Activated CD4-positive, alpha-beta T cell treated with anti-CD3 and anti-CD28 coated beads for 36 hours (primary cell): ENCODE measurements at regions of chr7 and their contacts with region 1.

Region 1: DNA sequence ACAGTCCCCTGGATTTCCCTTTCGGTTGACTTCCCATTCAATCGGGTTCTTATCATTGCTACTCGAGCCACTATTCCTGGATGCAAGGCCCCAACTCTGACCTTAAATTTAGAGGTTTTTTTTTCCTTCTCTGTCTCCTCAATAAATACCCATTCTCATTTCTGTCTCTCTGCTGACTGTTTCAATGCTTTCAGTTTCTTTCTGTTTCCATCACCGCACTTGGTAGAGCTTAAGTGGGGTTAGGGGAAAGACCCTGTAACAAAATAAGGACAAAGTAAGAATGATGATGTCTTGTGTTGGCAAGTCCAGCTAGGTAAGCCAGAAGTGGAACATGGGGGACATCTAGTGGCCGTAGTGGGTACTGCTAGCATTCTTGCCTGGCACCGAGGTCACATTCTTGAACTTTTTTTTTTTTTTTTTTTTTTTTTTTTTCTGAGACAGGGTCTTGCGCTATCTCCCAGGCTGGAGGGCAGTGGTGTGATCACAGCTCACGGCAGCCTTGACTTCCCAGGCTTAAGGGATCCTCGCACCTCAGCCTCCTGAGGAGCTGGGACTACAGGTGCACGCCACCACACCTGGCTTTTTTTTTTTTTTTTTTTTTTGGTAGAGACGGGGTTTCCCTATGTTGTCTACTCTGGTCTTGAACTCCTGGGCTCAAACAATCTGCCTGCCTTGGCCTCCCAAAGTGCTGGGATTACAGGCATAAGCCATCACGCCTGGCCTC is 40.3 kb downstream of the ZC3HC1 start:
- DNase-seq: peak; percentile 94
- ATAC-seq: peak; percentile 85
- H3K4me3 Mint-ChIP-seq: no peak overlapping the region
- H3K27ac Mint-ChIP-seq: peak overlapping the region; percentile 88
- H3K4me1 Mint-ChIP-seq: peaks cover 12% of the 10 kb centered on the region
- H3K27me3 Mint-ChIP-seq: no peaks in the 10 kb centered on the region

Region 2: DNA sequence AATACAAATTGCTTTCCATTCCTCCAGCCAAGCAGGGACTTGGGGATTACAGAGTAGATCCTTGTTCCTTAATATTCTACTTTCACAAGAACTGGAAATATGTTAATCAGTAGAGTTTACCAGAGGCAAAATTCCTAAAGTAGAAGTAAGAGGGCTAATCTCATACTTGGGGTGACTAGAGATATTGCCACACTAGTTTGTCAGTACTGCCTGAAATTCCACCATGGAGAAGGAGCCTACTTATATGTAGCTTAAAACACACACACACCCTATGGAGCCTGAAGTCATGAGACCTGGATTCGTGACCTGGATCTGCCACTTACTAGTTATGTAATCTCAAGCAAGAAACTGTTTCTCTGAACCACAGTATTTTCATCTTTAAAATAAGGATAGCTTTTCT is 542.8 kb before region 1 on chr7:
- CTCF ChIA-PET with region 1: interaction called, 4 read pairs
- POLR2A ChIA-PET with region 1: no interaction called
- intact Hi-C with region 1: loop called in 1 of 2 experiments (anchors 10 kb)
- DNase-seq: no peak
- ATAC-seq: no peak
- H3K4me3 Mint-ChIP-seq: no peak overlapping the region
- H3K27ac Mint-ChIP-seq: no peak overlapping the region
- H3K4me1 Mint-ChIP-seq: peaks cover 16% of the 10 kb centered on the region
- H3K27me3 Mint-ChIP-seq: no peaks in the 10 kb centered on the region

Region 3: GRCh38 chr7:129635300-129636029 is 375.4 kb before region 1 on chr7:
- CTCF ChIA-PET with region 1: no interaction called
- POLR2A ChIA-PET with region 1: interaction called, 13 read pairs
- intact Hi-C with region 1: no loop called
- DNase-seq: peak; percentile 84
- ATAC-seq: peak; percentile 97
- H3K4me3 Mint-ChIP-seq: no peak overlapping the region
- H3K27ac Mint-ChIP-seq: peak overlapping the region; percentile 65
- H3K4me1 Mint-ChIP-seq: peaks cover 37% of the 10 kb centered on the region
- H3K27me3 Mint-ChIP-seq: no peaks in the 10 kb centered on the region

Region 4: DNA sequence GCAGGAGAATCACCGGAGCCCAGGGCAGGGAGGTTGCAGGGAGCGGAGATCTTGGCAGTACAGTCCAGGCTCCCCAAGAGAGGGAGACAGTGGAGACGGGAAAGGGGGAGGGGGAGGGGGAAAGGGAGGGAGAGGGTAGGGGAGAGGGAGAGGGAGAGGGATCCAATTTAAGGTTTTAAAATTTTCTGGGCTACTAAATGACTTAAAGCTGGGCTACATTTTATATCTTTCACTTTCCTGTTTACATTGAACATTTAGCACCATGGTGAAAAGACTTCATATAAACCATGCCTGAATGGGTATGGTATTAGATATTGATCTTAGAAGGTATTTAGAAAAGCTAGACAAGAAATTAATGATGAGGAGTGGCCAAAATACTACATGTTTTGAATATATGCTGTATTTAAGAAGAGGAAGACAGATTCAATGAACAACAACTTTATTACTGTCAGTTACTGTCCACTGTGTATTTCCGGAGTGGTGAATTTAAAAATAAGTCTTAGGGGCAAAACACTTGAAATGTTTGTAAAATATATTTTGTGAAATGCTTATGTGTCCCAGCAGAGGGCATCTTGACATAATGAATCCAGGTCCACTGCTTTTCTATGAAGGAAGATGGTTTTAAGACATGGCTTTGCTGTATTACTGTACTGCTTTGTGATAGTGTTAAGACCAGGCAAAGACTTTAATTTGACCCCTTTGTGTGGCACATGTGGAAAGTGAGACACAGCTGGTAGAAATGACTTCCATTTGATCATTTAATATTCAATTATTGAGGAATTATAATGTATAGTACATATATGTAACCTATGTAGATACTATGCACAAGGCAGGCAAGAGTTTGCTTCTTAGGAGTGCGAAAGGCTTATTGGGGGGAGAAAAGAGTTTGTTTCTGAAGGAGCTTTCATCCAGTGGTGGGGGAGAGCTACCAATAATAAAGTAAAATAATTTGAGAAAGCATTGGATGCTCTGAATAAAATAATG is 346.5 kb before region 1 on chr7:
- CTCF ChIA-PET with region 1: interaction called, 7 read pairs
- POLR2A ChIA-PET with region 1: no interaction called
- intact Hi-C with region 1: loop called in 1 of 2 experiments (anchors 1 kb)
- DNase-seq: no peak
- ATAC-seq: no peak
- H3K4me3 Mint-ChIP-seq: no peak overlapping the region
- H3K27ac Mint-ChIP-seq: peak overlapping the region; percentile 25
- H3K4me1 Mint-ChIP-seq: peaks cover 10% of the 10 kb centered on the region
- H3K27me3 Mint-ChIP-seq: no peaks in the 10 kb centered on the region

Region 5: DNA sequence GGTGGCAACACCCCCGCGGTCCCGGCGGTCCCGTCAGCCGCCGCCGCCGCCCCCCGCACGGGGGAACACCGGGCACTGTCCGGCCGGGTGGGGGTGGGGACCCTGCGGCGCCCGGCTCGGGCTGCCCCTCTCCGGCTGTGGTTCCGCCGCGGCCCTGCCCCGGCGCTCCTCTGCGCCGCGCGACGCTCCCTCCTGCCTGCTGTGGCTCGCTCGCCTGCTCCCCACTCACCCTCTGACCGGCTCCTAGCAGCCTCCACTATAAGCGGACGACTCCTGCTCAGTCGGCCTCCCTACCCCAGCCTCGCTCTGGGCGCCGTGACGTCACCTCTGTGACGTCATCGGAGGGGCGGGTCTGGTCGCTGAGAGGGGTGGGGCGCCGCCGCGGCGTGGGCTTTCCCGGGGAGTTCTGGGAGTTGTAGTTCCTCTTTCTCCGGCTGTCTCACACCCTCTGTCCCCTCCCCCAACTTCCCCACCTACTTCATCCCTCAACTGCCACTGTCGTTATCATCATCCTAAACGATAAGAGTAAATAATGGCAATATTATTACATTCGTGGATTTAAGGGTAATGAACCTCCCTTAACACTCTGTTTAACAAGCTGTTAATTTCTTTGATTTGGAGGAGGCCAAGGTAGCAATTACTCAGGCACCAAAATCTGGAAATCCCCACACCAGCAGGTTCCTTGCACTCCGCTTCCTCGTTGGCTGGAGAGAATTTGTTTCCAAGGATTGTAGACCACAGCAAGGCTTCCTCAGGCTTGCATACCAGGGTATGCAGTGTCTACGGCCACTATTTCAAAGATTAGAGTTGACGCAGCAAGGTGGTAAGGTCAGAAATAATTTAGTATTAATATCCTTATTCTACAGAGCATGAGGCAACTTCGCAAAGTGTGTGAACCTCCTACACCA is 57.9 kb before region 1 on chr7 and contains the start of gene UBE2H:
- CTCF ChIA-PET with region 1: interaction called, 4 read pairs
- POLR2A ChIA-PET with region 1: interaction called, 4 read pairs
- intact Hi-C with region 1: loop called (anchors 1 to 2 kb)
- DNase-seq: peak; percentile 96
- ATAC-seq: peak; percentile 66
- H3K4me3 Mint-ChIP-seq: no peak within 1 kb of the TSS
- H3K27ac Mint-ChIP-seq: peak within 1 kb of the TSS; percentile 99
- H3K4me1 Mint-ChIP-seq: peaks cover 8% of the 10 kb centered on the region
- H3K27me3 Mint-ChIP-seq: no peaks in the 10 kb centered on the region
- total RNA-seq, gene UBE2H: 25.6 to 40.7 TPM